Activated T-helper 1 cell treated with anti-CD3 and anti-CD28 coated beads, Interleukin-12 subunit alpha, Interleukin-12 subunit beta, Interleukin-2, Interleukin-4 antibody, amounts not matched to agents 30 ng/mL and 10 ng/mL and 1 ng/mL, durations not matched to agents 14 hours and 24 hours and 36 hours (primary cell): ENCODE measurements at regions of chr5 and their contacts with region 1.

Region 1: DNA sequence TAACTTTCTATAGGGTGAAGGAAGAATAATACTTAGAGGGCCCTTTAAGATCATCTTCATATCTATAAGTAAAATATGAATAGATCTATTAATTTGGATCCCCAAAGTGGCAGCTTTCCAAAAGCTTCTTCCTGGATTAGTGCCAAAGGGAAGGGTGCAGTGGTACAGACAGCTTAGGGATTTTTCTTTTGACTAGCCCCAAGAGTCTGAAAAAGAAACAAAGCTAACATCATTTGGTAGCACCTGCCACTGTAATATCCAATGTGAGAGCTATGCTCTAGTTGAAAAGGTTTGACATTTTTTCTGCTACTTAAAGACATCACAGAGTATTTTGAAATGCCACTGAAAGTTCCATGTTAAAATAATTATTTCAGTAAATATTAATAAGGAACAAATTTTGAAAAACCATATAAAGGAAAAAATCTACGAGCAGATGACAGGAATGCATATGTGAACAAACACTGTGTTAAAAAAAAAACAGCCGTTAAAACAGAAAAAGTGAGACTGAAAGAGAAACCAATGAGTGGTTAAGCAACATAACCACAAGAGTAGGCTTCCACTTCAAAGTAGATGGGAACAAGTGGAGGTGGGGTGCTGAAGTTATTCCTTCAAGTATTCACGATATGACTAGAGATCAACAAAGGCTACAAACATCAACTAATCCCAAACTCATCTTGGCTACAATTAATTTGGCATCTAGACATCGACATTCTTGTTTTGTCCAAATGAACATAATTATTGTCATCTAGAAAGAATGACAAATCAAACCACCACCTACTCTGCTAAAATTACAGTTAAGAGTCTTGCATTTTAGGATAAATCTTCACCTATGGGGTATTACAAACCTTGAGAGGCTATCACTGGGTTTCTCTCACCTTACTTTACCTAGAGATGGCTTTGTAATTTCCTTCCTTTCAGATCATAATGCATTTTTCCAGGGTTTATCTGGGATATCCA is 137.5 kb downstream of the CPLANE1 start:
- DNase-seq: peak; percentile 43
- H3K4me3 Mint-ChIP-seq: peak overlapping the region; percentile 50
- H3K27ac Mint-ChIP-seq: peak overlapping the region; percentile 79
- H3K4me1 Mint-ChIP-seq: peaks cover 42% of the 10 kb centered on the region
- H3K27me3 Mint-ChIP-seq: no peaks in the 10 kb centered on the region

Region 2: GRCh38 chr5:37054391-37054790 is 57.3 kb before region 1 on chr5:
- intact Hi-C with region 1: loop called (anchors 2 kb)
- DNase-seq: no peak
- H3K4me3 Mint-ChIP-seq: no peak overlapping the region
- H3K27ac Mint-ChIP-seq: no peak overlapping the region
- H3K4me1 Mint-ChIP-seq: peaks cover 21% of the 10 kb centered on the region
- H3K27me3 Mint-ChIP-seq: no peaks in the 10 kb centered on the region

Region 3: DNA sequence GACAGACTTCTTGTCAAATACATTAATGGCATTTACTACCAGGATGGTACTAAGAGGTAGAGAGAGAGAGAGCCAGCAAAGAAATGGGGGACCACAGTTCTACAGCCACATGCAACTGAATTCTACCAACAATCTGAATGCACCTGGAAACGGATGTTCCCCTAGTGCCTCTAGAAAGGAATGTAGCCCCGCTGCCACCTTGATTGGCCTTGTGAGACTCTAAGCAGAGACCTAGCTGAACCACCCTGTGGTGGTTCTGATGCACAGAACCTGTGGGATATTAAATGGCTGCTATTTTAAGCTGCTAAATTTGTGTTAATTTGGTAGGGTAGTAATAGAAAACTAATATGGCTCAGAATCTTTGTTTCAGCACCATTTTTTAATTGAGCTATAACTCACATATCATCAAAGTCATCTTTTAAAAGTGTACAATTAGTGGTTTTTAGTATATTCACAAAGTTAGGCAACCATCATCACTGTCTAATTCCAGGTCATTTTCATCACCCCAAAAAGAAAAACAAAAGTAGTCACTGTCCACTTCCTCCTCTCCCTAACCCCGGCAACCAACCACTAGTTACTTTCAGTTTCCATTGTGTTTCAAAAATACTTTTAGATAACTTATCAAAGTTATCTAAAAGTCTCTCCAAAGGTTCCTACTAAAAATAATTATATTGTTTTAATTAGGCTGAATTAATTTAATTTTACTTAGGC is 85.8 kb after region 1 on chr5:
- intact Hi-C with region 1: loop called (anchors 2 kb)
- DNase-seq: no peak
- H3K4me3 Mint-ChIP-seq: peak overlapping the region; percentile 70
- H3K27ac Mint-ChIP-seq: peak overlapping the region; percentile 70
- H3K4me1 Mint-ChIP-seq: peaks cover 27% of the 10 kb centered on the region
- H3K27me3 Mint-ChIP-seq: no peaks in the 10 kb centered on the region

Region 4: DNA sequence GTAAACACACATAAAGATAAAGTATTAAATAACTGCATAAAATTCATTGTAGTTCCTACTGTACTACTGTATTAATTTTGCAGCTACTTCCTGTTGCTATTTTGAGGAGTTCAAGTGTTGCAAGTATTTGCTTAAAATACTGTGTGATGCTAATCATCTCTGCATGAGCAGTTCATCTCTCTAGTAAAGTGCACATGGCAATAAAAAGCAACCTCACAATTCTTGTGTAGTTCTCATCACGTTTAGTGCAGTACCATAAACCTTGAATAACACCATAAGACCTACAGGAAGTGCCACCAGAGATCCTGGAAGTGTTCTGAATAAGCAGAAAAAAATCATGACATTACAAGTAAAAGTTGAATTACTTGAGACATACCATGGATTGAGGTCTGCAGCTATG is 102.8 kb after region 1 on chr5:
- intact Hi-C with region 1: loop called (anchors 5 kb)
- DNase-seq: no peak
- H3K4me3 Mint-ChIP-seq: no peak overlapping the region
- H3K27ac Mint-ChIP-seq: no peak overlapping the region
- H3K4me1 Mint-ChIP-seq: peaks cover 6% of the 10 kb centered on the region
- H3K27me3 Mint-ChIP-seq: no peaks in the 10 kb centered on the region

Region 5: GRCh38 chr5:37248970-37249686 is 137.4 kb after region 1 on chr5 and contains the start of gene CPLANE1:
- intact Hi-C with region 1: loop called (anchors 2 kb)
- DNase-seq: peak; percentile 51
- H3K4me3 Mint-ChIP-seq: peak within 1 kb of the TSS; percentile 88
- H3K27ac Mint-ChIP-seq: peak within 1 kb of the TSS; percentile 71
- H3K4me1 Mint-ChIP-seq: peaks cover 12% of the 10 kb centered on the region
- H3K27me3 Mint-ChIP-seq: no peaks in the 10 kb centered on the region
- total RNA-seq, gene CPLANE1: 5.5 and 7.7 TPM in 2 replicates

Region 6: DNA sequence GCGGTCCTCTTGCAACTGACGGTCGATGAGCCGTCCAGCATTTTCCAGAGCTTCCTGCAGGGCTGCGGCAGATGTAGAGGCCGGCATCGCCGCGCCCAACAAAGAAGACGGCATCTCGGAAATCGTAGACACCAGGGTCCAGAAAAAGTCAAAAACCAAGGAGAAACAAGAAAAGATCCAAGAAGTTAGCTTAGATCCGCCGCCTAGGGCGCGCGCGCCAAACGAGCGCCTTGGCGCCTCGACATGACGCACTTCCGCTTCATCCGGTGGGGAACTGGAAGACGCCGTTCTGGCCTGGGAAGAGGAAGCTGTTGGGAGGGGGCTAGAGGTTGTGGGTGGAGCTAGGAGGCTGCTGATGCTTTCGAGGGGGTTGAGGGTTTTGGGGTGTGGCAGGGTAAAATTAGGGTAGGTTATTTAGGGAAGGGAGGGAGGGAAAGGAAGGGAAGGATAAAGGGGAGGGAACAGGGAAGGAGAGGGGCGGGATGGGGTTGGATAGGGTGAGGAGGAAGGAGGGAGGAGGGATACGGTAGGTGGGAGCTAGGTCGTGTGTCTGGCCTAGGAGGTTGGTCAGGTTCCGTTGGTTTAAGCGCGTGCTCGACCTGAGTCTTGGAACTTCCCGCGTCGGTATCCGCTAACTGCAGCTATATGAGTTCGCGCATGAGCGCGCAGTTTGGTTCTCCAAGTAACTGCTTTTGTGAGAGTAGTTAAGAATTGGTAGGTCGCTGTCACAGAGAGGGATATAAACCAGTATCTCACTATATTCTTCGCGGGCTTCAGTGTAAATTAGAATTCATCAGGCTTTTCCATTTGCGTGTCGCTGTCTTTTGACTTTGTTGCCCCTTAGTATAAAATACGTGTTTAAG is 259.4 kb after region 1 on chr5 and contains the start of gene NUP155:
- intact Hi-C with region 1: loop called (anchors 2 kb)
- DNase-seq: peak; percentile 87
- H3K4me3 Mint-ChIP-seq: peak within 1 kb of the TSS; percentile 94
- H3K27ac Mint-ChIP-seq: peak within 1 kb of the TSS; percentile 97
- H3K4me1 Mint-ChIP-seq: peaks cover 37% of the 10 kb centered on the region
- H3K27me3 Mint-ChIP-seq: no peaks in the 10 kb centered on the region
- total RNA-seq, gene NUP155: 72.5 and 82.1 TPM in 2 replicates

Region 7: DNA sequence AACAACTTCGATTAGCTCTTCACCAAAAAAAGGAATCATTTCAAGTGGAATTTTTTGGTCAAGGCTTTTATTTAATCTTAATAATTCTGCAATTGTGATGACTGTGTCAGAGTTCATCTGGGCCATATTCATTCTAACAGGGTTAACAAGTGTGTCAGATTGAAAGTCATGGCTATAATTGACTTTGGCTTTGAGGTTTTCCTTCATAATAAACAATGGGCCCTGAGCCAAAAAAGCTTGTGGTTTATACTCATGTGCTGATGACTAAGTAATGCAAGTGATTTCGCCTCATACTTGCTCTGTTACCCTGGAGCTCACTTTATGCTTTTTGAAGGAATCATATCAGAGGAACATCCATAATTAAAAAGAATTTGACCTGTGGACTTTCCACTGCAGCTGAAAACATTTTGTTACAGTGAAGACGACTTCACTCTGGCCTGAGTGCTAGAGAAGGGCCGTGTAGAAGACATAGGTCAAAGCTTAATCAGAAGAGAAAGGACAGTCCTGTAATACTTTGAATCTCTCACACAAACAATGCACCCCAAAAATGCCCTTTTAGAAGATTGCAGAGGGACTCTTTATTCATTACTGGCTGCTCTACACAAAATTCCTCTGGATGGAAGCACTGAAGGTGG is 626.5 kb after region 1 on chr5:
- intact Hi-C with region 1: loop called (anchors 5 kb)
- DNase-seq: peak; percentile 4
- H3K4me3 Mint-ChIP-seq: peak overlapping the region; percentile 51
- H3K27ac Mint-ChIP-seq: peak overlapping the region; percentile 81
- H3K4me1 Mint-ChIP-seq: peaks cover 35% of the 10 kb centered on the region
- H3K27me3 Mint-ChIP-seq: no peaks in the 10 kb centered on the region